Caco-2 (cell line): ENCODE measurements at regions of chr4 and their contacts with region 1.

Region 1: GRCh38 chr4:47562297-47562696 is 77.2 kb downstream of the ATP10D start:
- DNase-seq: no peak
- H3K4me3 ChIP-seq: no peak overlapping the region
- H3K4me3 Mint-ChIP-seq: no peak overlapping the region
- H3K27ac Mint-ChIP-seq: no peak overlapping the region
- H3K4me1 ChIP-seq: peaks cover 21% of the 10 kb centered on the region
- H3K4me1 Mint-ChIP-seq: peaks cover 16% of the 10 kb centered on the region
- H3K27me3 ChIP-seq: no peaks in the 10 kb centered on the region
- H3K27me3 Mint-ChIP-seq: no peaks in the 10 kb centered on the region
- CTCF ChIP-seq: no peak

Region 2: DNA sequence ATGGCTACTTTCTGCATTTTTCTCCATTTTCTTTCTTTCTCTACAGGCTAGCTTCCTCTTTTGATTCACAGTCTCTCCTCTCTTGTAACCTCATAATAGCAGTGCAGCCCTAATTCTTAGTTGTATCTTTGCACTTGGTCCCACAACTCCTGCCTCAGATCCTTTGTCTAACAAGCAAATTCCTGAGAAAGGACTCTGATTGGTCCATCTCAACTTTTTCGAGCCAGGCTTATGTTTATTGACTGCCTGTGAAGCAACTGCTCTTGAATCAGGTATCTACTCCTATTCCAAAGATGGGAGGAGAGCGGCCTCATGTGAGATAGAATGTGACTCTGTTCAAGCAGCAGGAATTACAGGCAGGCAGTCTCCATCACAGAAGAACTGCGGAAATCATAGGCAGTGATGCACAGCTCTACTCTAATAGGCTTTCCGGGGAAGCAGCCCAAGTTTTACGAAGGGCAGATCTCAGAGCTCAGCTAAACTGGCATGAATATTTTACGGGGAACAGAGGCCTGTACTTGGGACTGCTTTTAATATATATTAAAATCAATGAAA is 407.4 kb before region 1 on chr4:
- CTCF ChIA-PET with region 1: no interaction called
- POLR2A ChIA-PET with region 1: no interaction called
- intact Hi-C with region 1: loop called (anchors 10 kb)
- DNase-seq: peak in 1 of 2 experiments; percentile 26
- H3K4me3 ChIP-seq: no peak overlapping the region
- H3K4me3 Mint-ChIP-seq: no peak overlapping the region
- H3K27ac Mint-ChIP-seq: no peak overlapping the region
- H3K4me1 ChIP-seq: no peaks in the 10 kb centered on the region
- H3K4me1 Mint-ChIP-seq: peaks cover 7% of the 10 kb centered on the region
- H3K27me3 ChIP-seq: no peaks in the 10 kb centered on the region
- H3K27me3 Mint-ChIP-seq: no peaks in the 10 kb centered on the region
- CTCF ChIP-seq: no peak

Region 3: DNA sequence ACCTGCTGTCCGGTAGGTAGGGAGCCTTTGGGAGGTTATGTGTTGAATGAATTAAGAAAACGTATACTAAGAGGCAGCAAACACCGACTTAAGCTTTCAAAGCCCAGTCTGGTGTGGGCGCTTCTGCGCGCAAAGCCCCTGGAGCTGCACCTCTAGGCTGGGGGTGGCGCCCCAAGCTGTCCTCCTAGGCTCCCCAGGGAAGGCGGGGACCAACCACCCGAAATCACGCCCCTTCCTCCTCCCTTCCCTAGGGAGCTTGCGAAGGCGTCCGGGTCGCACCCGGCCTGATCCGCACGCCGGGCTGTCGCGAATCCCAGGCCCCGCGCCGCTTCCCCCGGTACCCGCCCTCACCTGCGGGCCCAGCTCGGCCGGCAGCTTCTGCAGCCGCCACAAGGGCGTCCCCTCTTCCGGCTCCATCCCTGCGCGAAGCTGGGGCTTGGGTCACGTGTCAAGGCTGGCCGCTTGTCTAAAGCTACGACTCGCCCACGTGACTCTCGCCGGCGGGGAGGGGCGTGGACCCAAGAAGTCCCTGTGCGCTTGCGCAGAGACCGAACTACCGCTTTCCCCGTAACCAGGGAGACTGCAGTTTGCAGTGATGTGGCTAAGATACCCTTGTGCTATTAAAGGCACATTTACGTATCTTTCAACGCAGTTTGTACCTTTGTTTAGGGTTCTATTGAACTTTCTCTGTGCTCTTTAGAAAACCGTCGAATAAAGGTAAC is 98.9 kb before region 1 on chr4 and contains the start of gene COMMD8:
- CTCF ChIA-PET with region 1: interaction called, 5 read pairs
- POLR2A ChIA-PET with region 1: no interaction called
- intact Hi-C with region 1: loop called (anchors 1 kb)
- DNase-seq: peak; percentile 96 to 97
- H3K4me3 ChIP-seq: peak within 1 kb of the TSS; percentile 67
- H3K4me3 Mint-ChIP-seq: peak within 1 kb of the TSS; percentile 87
- H3K27ac Mint-ChIP-seq: peak within 1 kb of the TSS; percentile 85
- H3K4me1 ChIP-seq: peaks cover 7% of the 10 kb centered on the region
- H3K4me1 Mint-ChIP-seq: peaks cover 20% of the 10 kb centered on the region
- H3K27me3 ChIP-seq: no peaks in the 10 kb centered on the region
- H3K27me3 Mint-ChIP-seq: no peaks in the 10 kb centered on the region
- CTCF ChIP-seq: peak; percentile 4 to 14
- total RNA-seq, gene COMMD8: 34.9 and 38.8 TPM in 2 replicates

Region 4: GRCh38 chr4:47490550-47490949 is 71.7 kb before region 1 on chr4:
- CTCF ChIA-PET with region 1: interaction called, 3 read pairs
- POLR2A ChIA-PET with region 1: no interaction called
- intact Hi-C with region 1: loop called (anchors 1 kb)
- DNase-seq: peak; percentile 37 to 47
- H3K4me3 ChIP-seq: no peak overlapping the region
- H3K4me3 Mint-ChIP-seq: no peak overlapping the region
- H3K27ac Mint-ChIP-seq: no peak overlapping the region
- H3K4me1 ChIP-seq: 0 out of 2 replicates have a peak, but pooled peaks cover 5% of the 10 kb centered on the region
- H3K4me1 Mint-ChIP-seq: no peaks in the 10 kb centered on the region
- H3K27me3 ChIP-seq: no peaks in the 10 kb centered on the region
- H3K27me3 Mint-ChIP-seq: no peaks in the 10 kb centered on the region
- CTCF ChIP-seq: peak; percentile 36 to 57

Region 5: DNA sequence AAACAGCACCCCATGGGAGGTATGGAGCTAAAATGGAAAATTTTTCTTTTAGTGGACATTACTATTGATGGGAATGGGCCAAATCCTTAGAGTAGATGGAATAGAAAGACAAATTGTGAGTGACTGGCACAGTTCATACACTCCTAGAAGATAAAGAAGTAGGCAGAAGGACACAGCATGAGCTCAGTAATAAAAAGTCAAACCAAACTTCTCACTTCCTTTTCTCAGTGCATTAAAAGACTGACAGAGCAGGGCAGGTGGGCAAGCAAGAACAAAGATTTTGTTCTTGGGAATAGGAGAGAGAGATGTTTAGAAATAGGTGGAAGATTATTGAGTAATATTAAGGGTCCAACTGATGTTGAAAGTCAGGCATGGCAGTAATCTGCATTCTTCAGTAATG is 55.3 kb after region 1 on chr4:
- CTCF ChIA-PET with region 1: no interaction called
- POLR2A ChIA-PET with region 1: no interaction called
- intact Hi-C with region 1: no loop called
- DNase-seq: no peak
- H3K4me3 ChIP-seq: no peak overlapping the region
- H3K4me3 Mint-ChIP-seq: no peak overlapping the region
- H3K27ac Mint-ChIP-seq: no peak overlapping the region
- H3K4me1 ChIP-seq: no peaks in the 10 kb centered on the region
- H3K4me1 Mint-ChIP-seq: no peaks in the 10 kb centered on the region
- H3K27me3 ChIP-seq: no peaks in the 10 kb centered on the region
- H3K27me3 Mint-ChIP-seq: peaks cover 10% of the 10 kb centered on the region
- CTCF ChIP-seq: no peak